CD8-positive, alpha-beta memory T cell (primary cell): ENCODE measurements at regions of chr14 and their contacts with region 1.

Region 1: DNA sequence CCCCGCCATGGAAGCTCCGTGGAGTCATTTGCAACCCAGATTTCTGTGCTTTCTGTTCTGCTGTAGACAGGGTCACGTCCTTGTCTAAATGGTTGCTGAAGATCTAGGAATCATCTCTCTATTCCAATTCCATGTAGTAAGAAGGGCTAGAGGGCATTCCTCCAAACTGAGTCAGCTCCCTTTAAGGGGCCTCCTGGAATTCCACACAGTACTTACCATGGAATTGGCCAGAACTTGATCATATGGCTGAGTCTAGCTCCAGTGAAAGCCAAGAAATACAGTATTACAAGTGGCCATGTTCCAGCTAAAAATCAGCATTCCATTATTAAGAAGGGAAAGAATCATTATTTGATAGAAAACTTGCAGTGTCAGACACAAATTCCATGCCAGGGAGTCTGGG is 171.9 kb downstream of the PRKCH start:
- DNase-seq: no peak
- H3K4me3 ChIP-seq: no peak overlapping the region
- H3K4me3 Mint-ChIP-seq: no peak overlapping the region
- H3K27ac ChIP-seq: no peak overlapping the region
- H3K27ac Mint-ChIP-seq: no peak overlapping the region
- H3K4me1 ChIP-seq: peaks cover 48% of the 10 kb centered on the region
- H3K4me1 Mint-ChIP-seq: peaks cover 19 to 46% (median 28%) of the 10 kb centered on the region in 3 donors
- H3K27me3 ChIP-seq: no peaks in the 10 kb centered on the region
- H3K27me3 Mint-ChIP-seq: no peaks in the 10 kb centered on the region

Region 2: DNA sequence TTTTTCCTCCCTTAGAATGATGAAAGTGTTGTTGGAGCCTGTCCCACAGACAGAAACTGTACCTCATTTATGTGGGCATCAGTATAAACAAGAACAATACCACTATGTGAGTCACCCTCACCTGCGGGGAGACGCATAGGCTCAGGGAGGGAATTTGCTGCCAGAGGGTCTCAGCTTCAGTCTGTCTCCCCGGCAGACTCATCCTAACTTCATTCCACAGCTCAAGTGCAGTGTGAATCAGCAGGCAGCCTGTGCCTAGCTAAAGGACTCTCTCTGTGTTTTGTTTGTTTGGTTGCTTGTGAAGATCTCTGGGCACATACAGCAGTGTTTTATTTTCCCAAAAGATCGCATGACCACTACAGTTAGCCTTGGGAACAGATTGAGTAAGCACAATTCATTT is 72.9 kb before region 1 on chr14:
- CTCF ChIA-PET with region 1: no interaction called
- POLR2A ChIA-PET with region 1: no interaction called
- DNase-seq: no peak
- H3K4me3 ChIP-seq: peak overlapping the region; percentile 26
- H3K4me3 Mint-ChIP-seq: peak overlapping the region in 6 of 7 donors; percentile 2 to 74 (median 64)
- H3K27ac ChIP-seq: no peak overlapping the region
- H3K27ac Mint-ChIP-seq: peak overlapping the region in 7 of 8 donors; percentile 64 to 96 (median 90)
- H3K4me1 ChIP-seq: peaks cover 88% of the 10 kb centered on the region
- H3K4me1 Mint-ChIP-seq: peaks cover 0 to 87% (median 5%) of the 10 kb centered on the region in 3 donors
- H3K27me3 ChIP-seq: no peaks in the 10 kb centered on the region
- H3K27me3 Mint-ChIP-seq: no peaks in the 10 kb centered on the region

Region 3: GRCh38 chr14:61503167-61503801 is 10.0 kb after region 1 on chr14:
- CTCF ChIA-PET with region 1: interaction called, 6 read pairs
- POLR2A ChIA-PET with region 1: interaction called, 13 read pairs
- DNase-seq: peak; percentile 38 to 79 (median 74)
- H3K4me3 ChIP-seq: peak overlapping the region; percentile 8
- H3K4me3 Mint-ChIP-seq: peak overlapping the region; percentile 22 to 89 (median 74)
- H3K27ac ChIP-seq: peak overlapping the region; percentile 2
- H3K27ac Mint-ChIP-seq: peak overlapping the region in 7 of 8 donors; percentile 86 to 100 (median 96)
- H3K4me1 ChIP-seq: peaks cover 91% of the 10 kb centered on the region
- H3K4me1 Mint-ChIP-seq: peaks cover 92 to 100% (median 99%) of the 10 kb centered on the region in 3 donors
- H3K27me3 ChIP-seq: no peaks in the 10 kb centered on the region
- H3K27me3 Mint-ChIP-seq: no peaks in the 10 kb centered on the region